ENCODE measurements at regions of chr16 and their contacts with region 1.

Region 1: GRCh38 chr16:30922960-30923535 is 324 bp upstream of the FBXL19 start:
- DNase-seq: peak; percentile 74 to 97 (median 95)
- ATAC-seq: peak; percentile 79
- H3K4me3 ChIP-seq: peak overlapping the region; percentile 72
- H3K4me3 Mint-ChIP-seq: peak overlapping the region; percentile 89 to 100 (median 99)
- H3K27ac ChIP-seq: peak overlapping the region; percentile 91
- H3K27ac Mint-ChIP-seq: peak overlapping the region; percentile 92 to 100 (median 99)
- H3K4me1 ChIP-seq: no peaks in the 10 kb centered on the region
- H3K4me1 Mint-ChIP-seq: peaks cover 0 to 32% (median 15%) of the 10 kb centered on the region in 7 donors
- H3K27me3 ChIP-seq: no peaks in the 10 kb centered on the region
- H3K27me3 Mint-ChIP-seq: peaks cover 0 to 3% (median 0%) of the 10 kb centered on the region in 5 donors

Region 2: DNA sequence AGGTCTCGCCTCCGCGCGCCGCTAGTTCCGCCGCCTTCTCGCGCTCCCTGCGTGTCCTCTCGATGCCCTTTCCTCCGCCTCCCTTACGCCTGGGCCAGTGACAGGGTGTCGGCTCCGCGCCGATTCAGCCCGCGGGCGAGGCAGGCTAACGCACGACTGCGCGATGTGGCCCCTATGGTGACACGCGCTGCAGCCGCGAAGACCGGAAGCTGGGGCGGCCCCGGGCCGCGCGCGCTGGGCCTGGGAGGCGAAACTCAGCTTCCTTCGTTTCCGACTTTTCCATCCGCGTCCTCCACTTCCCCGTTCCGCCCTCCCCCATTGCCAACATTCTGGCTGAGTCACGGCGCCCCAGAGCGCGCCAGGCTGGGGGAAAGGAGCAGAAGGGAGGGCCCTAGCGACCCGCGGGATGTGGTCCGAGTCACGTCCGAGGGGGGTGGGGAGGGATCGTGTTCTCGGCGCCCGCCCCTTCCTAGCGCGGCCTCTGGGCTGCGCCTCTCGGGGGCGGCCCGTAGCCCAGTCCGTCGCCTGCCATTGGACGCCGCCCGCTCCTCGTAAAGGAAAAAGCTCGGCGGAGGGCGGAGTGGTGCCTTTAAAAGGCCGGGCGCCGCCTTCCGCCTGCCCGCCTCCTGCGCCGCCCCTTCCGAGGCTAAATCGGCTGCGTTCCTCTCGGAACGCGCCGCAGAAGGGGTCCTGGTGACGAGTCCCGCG is 857.8 kb before region 1 on chr16 and contains the start of gene ALDOA:
- CTCF ChIA-PET with region 1: no interaction called
- POLR2A ChIA-PET with region 1: no interaction called
- intact Hi-C with region 1: loop called in 1 of 2 experiments (anchors 5 kb)
- DNase-seq: peak; percentile 82 to 97 (median 92)
- ATAC-seq: peak; percentile 90
- H3K4me3 ChIP-seq: peak within 1 kb of the TSS; percentile 94
- H3K4me3 Mint-ChIP-seq: peak within 1 kb of the TSS; percentile 96 to 100 (median 99)
- H3K27ac ChIP-seq: peak within 1 kb of the TSS; percentile 83
- H3K27ac Mint-ChIP-seq: peak within 1 kb of the TSS; percentile 90 to 99 (median 98)
- H3K4me1 ChIP-seq: peaks cover 13 to 37% of the 10 kb centered on the region in 2 donors
- H3K4me1 Mint-ChIP-seq: peaks cover 22 to 43% (median 35%) of the 10 kb centered on the region in 7 donors
- H3K27me3 ChIP-seq: no peaks in the 10 kb centered on the region
- H3K27me3 Mint-ChIP-seq: no peaks in the 10 kb centered on the region
- total RNA-seq, gene ALDOA: 356 to 1,619 (median 584) TPM

Region 3: DNA sequence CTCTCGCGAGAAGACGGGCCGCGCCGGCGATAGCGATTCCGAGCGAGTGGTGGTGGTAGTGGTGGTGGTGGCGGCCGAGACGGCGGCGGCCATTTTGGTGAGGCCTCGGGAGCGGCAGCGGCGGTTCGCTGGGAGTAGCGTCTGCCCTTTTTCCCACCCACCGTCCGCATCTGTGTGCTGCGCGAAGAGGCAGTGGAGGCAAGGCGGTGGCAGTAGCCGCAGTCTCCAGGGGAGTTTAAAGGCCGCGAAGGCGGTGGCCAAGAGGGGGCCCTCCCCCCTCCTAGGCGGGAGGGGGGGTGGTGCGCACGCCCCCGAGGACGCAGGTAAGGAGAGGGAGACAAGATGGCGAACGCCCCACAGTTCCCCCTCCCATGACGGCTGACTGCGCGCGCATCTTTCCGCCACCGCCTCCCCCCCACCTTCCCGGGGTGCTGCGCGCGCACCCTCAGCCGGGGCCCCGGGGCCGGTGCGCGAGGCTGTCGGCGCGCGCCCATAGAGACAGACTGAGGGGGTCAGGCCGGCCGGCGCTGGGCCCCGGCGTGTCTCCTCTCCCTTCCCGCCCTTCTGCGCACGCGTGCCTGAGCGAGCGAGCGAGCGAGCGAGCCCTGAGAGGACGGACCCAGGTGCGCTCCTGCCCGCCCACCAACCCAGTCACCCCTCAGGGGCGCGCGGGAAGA is 224.8 kb before region 1 on chr16:
- CTCF ChIA-PET with region 1: no interaction called
- POLR2A ChIA-PET with region 1: no interaction called
- intact Hi-C with region 1: loop called in 1 of 2 experiments (anchors 1 kb)
- DNase-seq: peak; percentile 98 to 100 (median 99)
- ATAC-seq: peak; percentile 86
- H3K4me3 ChIP-seq: peak overlapping the region; percentile 86
- H3K4me3 Mint-ChIP-seq: peak overlapping the region; percentile 87 to 99 (median 97)
- H3K27ac ChIP-seq: peak overlapping the region; percentile 99
- H3K27ac Mint-ChIP-seq: peak overlapping the region; percentile 99 to 100 (median 100)
- H3K4me1 ChIP-seq: peaks cover 15 to 35% of the 10 kb centered on the region in 2 donors
- H3K4me1 Mint-ChIP-seq: peaks cover 26 to 48% (median 41%) of the 10 kb centered on the region in 7 donors
- H3K27me3 ChIP-seq: no peaks in the 10 kb centered on the region
- H3K27me3 Mint-ChIP-seq: no peaks in the 10 kb centered on the region

Region 4: DNA sequence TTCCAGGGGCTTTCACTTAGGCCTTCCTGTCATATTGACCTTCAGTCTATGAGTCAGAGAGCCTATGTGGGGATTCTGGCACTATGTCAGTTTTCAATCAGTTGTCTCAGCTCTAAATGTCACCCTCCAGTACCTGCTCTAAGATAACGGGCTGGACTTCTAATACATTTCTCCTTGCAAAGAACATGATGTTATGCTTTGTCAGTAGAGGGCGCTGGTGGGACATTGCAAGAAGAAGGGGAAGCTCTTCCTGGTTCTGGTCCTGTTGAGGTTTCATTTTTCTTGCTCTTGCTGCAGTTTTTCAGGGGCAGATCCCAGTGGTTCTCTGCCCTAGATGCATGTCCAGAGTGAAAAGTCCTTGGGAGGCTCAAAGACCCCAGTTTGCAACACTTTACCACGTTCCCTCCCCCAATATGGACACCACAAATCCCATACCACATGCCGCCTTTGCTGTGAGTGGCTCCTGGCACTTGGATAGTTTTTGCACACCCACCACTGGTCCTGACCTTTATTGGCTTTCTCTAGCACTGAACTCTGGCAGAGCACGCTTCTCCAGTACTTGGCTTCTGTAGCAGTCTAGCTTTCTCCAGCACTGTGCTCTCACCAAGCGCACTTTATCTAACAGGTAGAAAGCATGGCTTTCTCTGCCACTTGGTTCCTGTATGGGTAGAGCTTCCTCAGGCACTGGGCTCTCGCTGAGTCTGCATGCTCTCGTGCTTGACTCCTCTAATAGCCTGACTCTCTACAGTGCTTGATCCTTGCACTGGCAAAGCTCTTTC is 78.2 kb before region 1 on chr16:
- CTCF ChIA-PET with region 1: interaction called, 44 read pairs
- POLR2A ChIA-PET with region 1: interaction called, 11 read pairs
- intact Hi-C with region 1: loop called in 1 of 2 experiments (anchors 1 kb)
- DNase-seq: peak; percentile 50 to 89 (median 83)
- ATAC-seq: peak; percentile 97
- H3K4me3 ChIP-seq: no peak overlapping the region
- H3K4me3 Mint-ChIP-seq: peak overlapping the region in 9 of 10 donors; percentile 22 to 67 (median 64)
- H3K27ac ChIP-seq: peak overlapping the region; percentile 1
- H3K27ac Mint-ChIP-seq: peak overlapping the region; percentile 2 to 82 (median 73)
- H3K4me1 ChIP-seq: peaks cover 0 to 5% of the 10 kb centered on the region in 2 donors
- H3K4me1 Mint-ChIP-seq: peaks cover 6 to 14% (median 8%) of the 10 kb centered on the region in 7 donors
- H3K27me3 ChIP-seq: no peaks in the 10 kb centered on the region
- H3K27me3 Mint-ChIP-seq: no peaks in the 10 kb centered on the region

Region 5: GRCh38 chr16:30948667-30949649 is 25.9 kb after region 1 on chr16 and contains the start of gene ORAI3:
- CTCF ChIA-PET with region 1: no interaction called
- POLR2A ChIA-PET with region 1: no interaction called
- intact Hi-C with region 1: loop called (anchors 1 kb)
- DNase-seq: peak in 4 of 9 donors; percentile 20 to 62 (median 28)
- ATAC-seq: peak; percentile 77
- H3K4me3 ChIP-seq: peak within 1 kb of the TSS; percentile 74
- H3K4me3 Mint-ChIP-seq: peak within 1 kb of the TSS; percentile 87 to 98 (median 90)
- H3K27ac ChIP-seq: peak within 1 kb of the TSS; percentile 75
- H3K27ac Mint-ChIP-seq: peak within 1 kb of the TSS; percentile 64 to 92 (median 80)
- H3K4me1 ChIP-seq: peaks cover 11 to 15% of the 10 kb centered on the region in 2 donors
- H3K4me1 Mint-ChIP-seq: peaks cover 13 to 23% (median 17%) of the 10 kb centered on the region in 7 donors
- H3K27me3 ChIP-seq: no peaks in the 10 kb centered on the region
- H3K27me3 Mint-ChIP-seq: no peaks in the 10 kb centered on the region
- total RNA-seq, gene ORAI3: 6.0 to 29.8 (median 18.4) TPM

Region 6: DNA sequence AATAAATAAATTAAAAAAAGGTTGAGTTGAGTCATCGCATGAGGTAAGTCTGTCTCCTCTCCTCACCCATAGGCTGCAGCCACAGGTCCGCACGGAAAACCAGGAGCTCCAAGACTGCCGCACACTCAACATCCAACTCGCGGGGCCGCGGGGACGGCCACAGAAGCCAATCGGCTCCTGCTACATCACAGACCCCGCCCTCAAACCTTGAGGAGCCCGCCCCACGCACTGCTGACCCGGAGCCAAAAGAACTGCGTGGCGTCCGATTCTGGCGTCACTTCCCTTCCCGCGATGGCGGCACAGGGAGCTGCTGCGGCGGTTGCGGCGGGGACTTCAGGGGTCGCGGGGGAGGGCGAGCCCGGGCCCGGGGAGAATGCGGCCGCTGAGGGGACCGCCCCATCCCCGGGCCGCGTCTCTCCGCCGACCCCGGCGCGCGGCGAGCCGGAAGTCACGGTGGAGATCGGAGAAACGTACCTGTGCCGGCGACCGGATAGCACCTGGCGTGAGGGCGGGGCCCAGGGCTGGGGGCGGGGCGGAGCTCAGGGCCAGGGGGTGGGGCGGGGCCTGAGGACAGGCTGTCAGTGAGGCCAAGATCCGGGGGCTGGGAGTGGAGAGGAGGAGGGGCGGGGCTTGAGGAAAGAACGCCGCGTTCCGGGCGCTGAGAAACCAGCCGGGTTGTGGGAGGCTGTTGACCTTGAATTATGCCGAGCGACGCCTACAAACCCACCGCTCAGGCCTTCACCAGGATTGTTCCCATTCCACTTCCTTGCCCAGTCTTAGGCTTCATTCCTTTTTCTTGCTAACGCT is 194.5 kb after region 1 on chr16 and contains the start of gene KAT8:
- CTCF ChIA-PET with region 1: no interaction called
- POLR2A ChIA-PET with region 1: no interaction called
- intact Hi-C with region 1: loop called (anchors 1 kb)
- DNase-seq: peak; percentile 88 to 99 (median 97)
- ATAC-seq: peak; percentile 95
- H3K4me3 ChIP-seq: peak within 1 kb of the TSS; percentile 65
- H3K4me3 Mint-ChIP-seq: peak within 1 kb of the TSS; percentile 86 to 95 (median 90)
- H3K27ac ChIP-seq: peak within 1 kb of the TSS; percentile 98
- H3K27ac Mint-ChIP-seq: peak within 1 kb of the TSS; percentile 77 to 96 (median 89)
- H3K4me1 ChIP-seq: peaks cover 7 to 15% of the 10 kb centered on the region in 2 donors
- H3K4me1 Mint-ChIP-seq: peaks cover 12 to 32% (median 24%) of the 10 kb centered on the region in 7 donors
- H3K27me3 ChIP-seq: no peaks in the 10 kb centered on the region
- H3K27me3 Mint-ChIP-seq: no peaks in the 10 kb centered on the region
- total RNA-seq, gene KAT8: 63.0 to 134 (median 112) TPM